WTC11 (cell line): ENCODE measurements at regions of chr14 and their contacts with region 1.

Region 1: DNA sequence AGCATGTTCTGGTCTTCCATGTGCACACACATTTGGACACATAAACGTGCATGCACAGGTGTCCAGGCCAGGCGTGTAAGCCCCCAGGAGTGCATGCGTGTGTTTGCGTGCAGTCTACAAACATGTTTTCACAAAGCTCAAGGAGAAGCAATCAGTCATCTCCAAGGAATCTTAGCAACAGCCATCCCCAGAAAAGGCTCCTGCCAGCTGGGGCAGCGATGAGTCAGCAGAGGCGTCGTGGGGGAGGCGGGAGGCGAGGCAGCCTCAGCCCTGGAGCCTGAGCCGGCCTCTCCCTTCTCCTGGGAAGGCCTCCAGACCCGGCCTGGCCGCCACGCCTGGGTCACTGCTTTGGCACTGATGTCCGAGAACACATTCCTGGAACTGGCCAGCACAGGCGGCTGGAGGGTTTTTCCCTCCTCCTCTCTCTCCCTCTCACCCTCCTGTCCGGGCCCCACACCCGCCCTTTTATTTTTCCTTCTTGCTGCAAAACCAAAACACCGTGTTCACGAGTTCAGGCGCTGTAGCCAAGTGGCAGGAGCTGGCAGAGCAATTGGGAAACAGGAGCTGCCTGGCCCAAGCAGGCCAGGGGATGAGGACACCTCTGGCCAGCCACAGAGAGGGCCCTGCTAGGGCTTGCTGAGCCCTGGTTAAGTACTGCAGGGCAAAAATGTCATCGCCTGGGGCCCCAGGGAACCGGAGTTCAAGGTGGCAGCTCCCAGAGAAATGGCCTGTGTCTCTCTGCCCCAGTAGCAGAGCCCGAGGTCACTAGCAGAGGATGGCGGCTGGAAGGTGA is 92.7 kb downstream of the LRRC74A start:
- DNase-seq: peak; percentile 53
- ATAC-seq: peak; percentile 33
- H3K4me3 Mint-ChIP-seq: no peak overlapping the region; the same call in 1 of the 2 replicates
- H3K27ac Mint-ChIP-seq: peak overlapping the region; percentile 85
- H3K4me1 Mint-ChIP-seq: peaks cover 81% of the 10 kb centered on the region
- H3K27me3 Mint-ChIP-seq: no peaks in the 10 kb centered on the region
- CTCF ChIP-seq: no peak

Region 2: DNA sequence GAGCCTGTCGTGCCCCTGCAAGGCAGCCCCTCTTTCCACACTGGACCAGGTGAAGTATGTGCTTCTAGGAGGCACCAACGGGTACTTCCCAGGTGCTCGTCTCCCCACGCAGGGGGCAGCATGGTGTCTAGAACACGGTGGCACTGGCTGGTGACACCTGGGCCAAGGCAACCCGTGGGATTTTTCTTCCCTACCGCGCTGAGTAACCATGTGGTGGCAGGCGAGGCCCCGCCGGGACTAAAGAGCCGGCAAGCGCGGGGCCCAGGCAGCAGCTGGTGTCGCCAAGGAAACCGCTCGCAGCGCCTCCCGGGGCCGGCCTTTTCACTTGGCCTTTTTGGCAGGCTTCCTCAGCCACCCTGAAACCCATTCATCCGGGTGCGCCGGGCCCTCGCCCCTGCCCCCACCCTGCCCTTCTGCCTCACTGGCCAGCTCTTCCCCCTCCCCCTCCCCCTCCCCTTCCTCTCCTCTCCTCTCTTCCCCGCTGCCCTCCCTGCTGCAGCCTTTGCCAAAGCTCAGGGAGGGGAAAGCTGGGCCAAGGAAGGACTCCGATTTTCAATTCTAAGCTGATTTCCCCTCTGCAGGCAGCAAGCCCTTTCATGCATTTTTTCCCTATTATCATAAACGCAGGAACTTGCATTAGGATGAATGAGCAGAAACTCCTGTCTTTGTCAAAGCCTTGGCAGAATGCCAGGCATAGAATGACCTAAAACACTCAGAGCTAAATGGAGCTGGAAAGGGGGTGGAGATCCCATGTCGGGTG is 28.3 kb after region 1 on chr14:
- CTCF ChIA-PET with region 1: interaction called, 20 read pairs
- POLR2A ChIA-PET with region 1: interaction called, 12 read pairs
- DNase-seq: peak; percentile 94
- ATAC-seq: peak; percentile 82
- H3K4me3 Mint-ChIP-seq: peak overlapping the region; percentile 49
- H3K27ac Mint-ChIP-seq: peak overlapping the region; percentile 99
- H3K4me1 Mint-ChIP-seq: peaks cover 51% of the 10 kb centered on the region
- H3K27me3 Mint-ChIP-seq: no peaks in the 10 kb centered on the region
- CTCF ChIP-seq: no peak

Region 3: DNA sequence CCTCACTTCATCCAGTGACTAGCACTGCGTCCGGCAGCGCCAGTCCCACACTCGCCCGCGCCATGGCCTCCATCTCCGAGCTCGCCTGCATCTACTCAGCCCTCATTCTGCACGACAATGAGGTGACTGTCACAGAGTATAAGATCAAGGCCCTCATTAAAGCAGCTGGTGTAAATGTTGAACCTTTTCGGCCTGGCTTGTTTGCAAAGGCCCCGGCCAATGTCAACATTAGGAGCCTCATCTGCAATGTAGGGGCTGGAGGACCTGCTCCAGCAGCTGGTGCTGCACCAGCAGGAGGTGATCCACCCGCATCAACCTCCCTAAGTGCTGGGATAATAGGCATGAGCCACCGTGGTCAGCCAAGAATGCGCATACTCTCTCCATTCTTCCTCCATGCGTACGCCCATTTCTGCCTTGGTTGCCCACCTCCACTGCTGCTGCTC is 49.7 kb after region 1 on chr14:
- CTCF ChIA-PET with region 1: interaction called, 12 read pairs
- POLR2A ChIA-PET with region 1: no interaction called
- DNase-seq: peak; percentile 61
- ATAC-seq: peak; percentile 76
- H3K4me3 Mint-ChIP-seq: peak overlapping the region; percentile 1
- H3K27ac Mint-ChIP-seq: peak overlapping the region; percentile 92
- H3K4me1 Mint-ChIP-seq: peaks cover 59% of the 10 kb centered on the region
- H3K27me3 Mint-ChIP-seq: no peaks in the 10 kb centered on the region
- CTCF ChIP-seq: no peak

Region 4: DNA sequence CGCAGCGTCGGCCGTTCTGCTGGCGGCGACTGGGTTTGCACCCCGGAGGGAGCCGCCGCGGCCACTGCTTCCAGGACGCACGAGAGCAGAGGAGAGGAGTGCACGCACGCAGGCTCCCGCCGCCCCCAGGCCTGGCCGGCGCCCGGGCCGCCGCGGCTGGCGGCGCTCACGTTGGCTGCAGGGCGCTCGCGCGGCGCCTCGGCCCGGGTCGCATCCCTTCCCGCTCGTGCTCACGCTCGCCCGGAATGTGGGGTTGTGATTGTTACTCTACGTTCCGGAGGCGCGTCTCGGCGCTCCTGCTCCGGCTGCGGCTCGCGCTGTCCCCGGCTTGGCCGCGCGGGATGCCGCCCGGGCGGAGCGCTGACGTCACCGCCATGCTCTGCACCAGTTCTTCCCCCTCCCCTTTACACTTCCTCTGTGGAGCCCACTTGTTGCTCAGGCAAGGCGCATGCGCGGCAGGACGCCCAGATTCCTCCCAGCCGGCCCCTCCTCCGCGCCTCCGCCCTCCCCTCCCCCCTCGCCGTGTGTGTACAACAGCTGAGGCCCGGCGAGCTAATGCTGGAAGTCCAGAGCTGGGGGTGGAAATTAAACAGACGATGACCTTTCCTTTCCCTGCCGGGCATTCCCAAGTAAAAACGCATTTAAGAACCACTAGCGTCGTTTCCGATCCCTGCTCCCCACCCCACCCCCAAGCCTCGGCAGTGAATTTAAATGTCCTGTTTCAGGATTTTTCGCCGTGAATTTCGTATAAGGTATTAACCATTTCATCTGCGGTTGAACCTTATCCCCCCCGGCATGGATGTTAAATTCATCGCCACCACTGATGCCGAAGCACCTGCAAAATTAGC is 109.7 kb after region 1 on chr14 and contains the start of gene IRF2BPL:
- CTCF ChIA-PET with region 1: interaction called, 45 read pairs
- POLR2A ChIA-PET with region 1: interaction called, 38 read pairs
- DNase-seq: peak; percentile 96
- ATAC-seq: peak; percentile 43
- H3K4me3 Mint-ChIP-seq: peak within 1 kb of the TSS; percentile 76
- H3K27ac Mint-ChIP-seq: peak within 1 kb of the TSS; percentile 98
- H3K4me1 Mint-ChIP-seq: peaks cover 52% of the 10 kb centered on the region
- H3K27me3 Mint-ChIP-seq: peaks cover 2% of the 10 kb centered on the region; the same call in 1 of the 2 replicates
- CTCF ChIP-seq: no peak
- total RNA-seq, gene IRF2BPL: 106 to 126 TPM (median 110 TPM) in 3 replicates

Region 5: GRCh38 chr14:77059276-77059915 is 140.4 kb after region 1 on chr14:
- CTCF ChIA-PET with region 1: interaction called, 30 read pairs
- POLR2A ChIA-PET with region 1: interaction called, 4 read pairs
- DNase-seq: peak; percentile 61
- ATAC-seq: peak; percentile 90
- H3K4me3 Mint-ChIP-seq: no peak overlapping the region
- H3K27ac Mint-ChIP-seq: no peak overlapping the region
- H3K4me1 Mint-ChIP-seq: peaks cover 22% of the 10 kb centered on the region
- H3K27me3 Mint-ChIP-seq: no peaks in the 10 kb centered on the region
- CTCF ChIP-seq: no peak

Region 6: DNA sequence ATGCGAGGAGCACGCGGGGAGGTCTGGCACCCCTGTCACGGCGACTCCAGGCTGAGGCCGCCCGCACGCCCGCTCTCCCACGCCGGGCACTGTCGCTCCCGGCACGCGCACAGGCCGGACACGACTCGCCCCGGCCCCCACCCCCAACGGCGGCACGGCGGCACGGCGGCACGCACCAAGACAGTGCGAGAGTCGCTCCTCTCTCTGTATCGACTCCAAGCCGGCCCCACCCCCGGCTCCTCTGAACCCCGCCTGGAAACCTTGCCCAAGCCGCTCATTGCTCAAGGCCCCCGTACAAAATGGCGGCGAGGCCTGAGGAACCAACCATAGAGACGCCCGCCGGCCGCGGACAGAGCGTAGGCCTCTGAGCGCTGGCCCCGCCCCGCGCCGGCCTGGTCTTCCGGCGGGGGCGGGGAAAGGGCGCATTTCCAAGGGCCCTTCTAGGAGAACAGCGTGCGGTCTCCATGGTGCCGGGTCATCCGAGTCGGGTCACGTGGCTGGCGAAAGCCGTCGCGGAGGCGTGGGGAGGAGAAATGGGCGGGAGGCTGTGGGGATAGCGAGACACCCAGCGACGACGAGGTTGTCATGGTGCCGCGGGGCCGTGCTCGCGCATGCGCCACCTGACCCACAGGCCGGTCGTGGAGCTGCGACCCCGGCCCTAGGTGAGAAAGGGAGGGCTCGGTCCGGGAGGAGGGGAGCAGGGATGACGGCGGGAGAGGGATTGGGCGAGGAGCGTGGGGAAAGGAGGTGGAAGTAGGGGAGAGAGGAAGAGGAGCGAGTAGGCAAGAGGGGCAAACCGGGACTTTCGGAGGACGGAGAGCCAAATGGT is 179.0 kb after region 1 on chr14 and contains the start of gene CIPC:
- CTCF ChIA-PET with region 1: interaction called, 10 read pairs
- POLR2A ChIA-PET with region 1: no interaction called
- DNase-seq: peak; percentile 97
- ATAC-seq: peak; percentile 94
- H3K4me3 Mint-ChIP-seq: peak within 1 kb of the TSS; percentile 84
- H3K27ac Mint-ChIP-seq: peak within 1 kb of the TSS; percentile 95
- H3K4me1 Mint-ChIP-seq: peaks cover 52% of the 10 kb centered on the region
- H3K27me3 Mint-ChIP-seq: no peaks in the 10 kb centered on the region
- CTCF ChIP-seq: no peak
- total RNA-seq, gene CIPC: 22.5 to 25.4 TPM (median 24.2 TPM) in 3 replicates